ENCODE measurements at regions of chr2 and their contacts with region 1.

Region 1: GRCh38 chr2:69356471-69356870 is 30.6 kb downstream of the GFPT1 start:
- DNase-seq: no peak
- H3K4me3 ChIP-seq: no peak overlapping the region
- H3K27ac ChIP-seq: no peak overlapping the region
- H3K4me1 ChIP-seq: no peaks in the 10 kb centered on the region
- H3K27me3 ChIP-seq: no peaks in the 10 kb centered on the region
- CTCF ChIP-seq: no peak

Region 2: DNA sequence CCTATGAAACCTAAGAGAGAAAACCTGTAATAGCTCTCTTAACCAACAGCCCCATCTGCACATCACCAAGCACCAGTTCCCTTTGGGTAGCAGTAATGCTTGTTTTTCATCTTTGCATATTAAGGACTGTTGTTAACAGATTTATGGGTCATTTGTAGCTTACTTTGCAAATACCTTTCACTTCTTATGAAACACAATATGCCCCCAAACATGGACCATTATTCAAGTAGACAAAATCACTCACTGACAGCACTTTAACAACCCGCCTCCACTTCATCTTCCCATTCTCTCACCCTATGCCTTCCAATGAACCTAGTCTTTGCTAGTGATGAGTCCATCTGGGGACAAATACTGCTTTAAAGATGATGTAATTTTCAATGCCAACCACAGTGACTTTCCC is 33.8 kb before region 1 on chr2:
- intact Hi-C with region 1: loop called (anchors 5 kb)
- DNase-seq: no peak
- H3K4me3 ChIP-seq: no peak overlapping the region
- H3K27ac ChIP-seq: peak overlapping the region in 1 of 2 donors; percentile 65
- H3K4me1 ChIP-seq: peaks cover 0 to 25% (median 6%) of the 10 kb centered on the region in 4 donors
- H3K27me3 ChIP-seq: no peaks in the 10 kb centered on the region
- CTCF ChIP-seq: no peak

Region 3: GRCh38 chr2:70828914-70829824 is 1472.7 kb after region 1 on chr2:
- intact Hi-C with region 1: no loop called
- DNase-seq: peak in 1 of 2 donors; percentile 57
- H3K4me3 ChIP-seq: no peak overlapping the region
- H3K27ac ChIP-seq: no peak overlapping the region
- H3K4me1 ChIP-seq: peaks cover 0 to 11% (median 2%) of the 10 kb centered on the region in 4 donors
- H3K27me3 ChIP-seq: no peaks in the 10 kb centered on the region
- CTCF ChIP-seq: no peak

Measured in tibial artery (tissue), 4 donors.